ENCODE measurements at regions of chr11 and their contacts with region 1.

Region 1: DNA sequence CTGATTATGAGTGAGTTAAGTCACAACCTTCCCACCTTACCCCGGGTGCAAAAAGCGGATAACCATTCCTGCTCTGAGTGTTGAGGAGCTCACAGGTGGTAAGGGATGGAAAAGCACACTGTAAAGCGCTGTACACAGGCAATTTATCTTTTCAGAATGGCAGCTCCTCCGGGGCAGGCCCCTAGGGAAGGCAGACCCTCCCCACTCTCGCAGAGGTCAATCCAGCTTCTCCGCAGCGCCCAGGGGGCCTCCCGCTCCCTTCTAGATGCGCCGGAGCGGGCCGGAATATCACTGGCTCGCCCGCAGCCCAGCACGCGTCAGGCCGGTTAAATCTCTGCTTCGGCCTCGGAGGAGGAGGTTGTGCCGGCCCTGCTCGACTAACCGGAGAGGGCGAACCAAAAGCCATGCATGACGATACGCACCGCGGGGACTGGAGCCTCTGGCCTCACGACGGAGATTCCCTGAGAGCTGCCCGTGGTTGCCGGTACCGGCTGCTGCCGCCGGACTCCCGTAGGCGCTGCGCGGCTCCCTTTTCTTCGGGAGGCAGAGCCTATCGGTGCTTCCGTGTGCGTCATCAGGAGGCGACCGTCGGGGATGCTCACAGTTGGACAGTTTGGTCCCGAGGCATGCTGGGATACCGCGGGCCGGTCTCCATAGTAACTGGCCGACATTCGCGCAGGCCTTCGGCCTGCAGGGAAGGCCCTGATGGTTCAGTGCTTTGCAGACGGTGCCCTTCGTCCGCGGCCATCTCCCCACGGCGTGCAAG is at the start of gene BRMS1:
- DNase-seq: peak; percentile 94
- H3K4me3 Mint-ChIP-seq: peak within 1 kb of the TSS; percentile 97
- H3K27ac Mint-ChIP-seq: peak within 1 kb of the TSS; percentile 95
- H3K4me1 Mint-ChIP-seq: peaks cover 46% of the 10 kb centered on the region
- H3K27me3 Mint-ChIP-seq: peaks cover 2% of the 10 kb centered on the region
- total RNA-seq, gene BRMS1: 63.1 and 67.1 TPM in 2 replicates

Region 2: GRCh38 chr11:66051766-66052663 is 292.7 kb before region 1 on chr11 and contains the start of gene SF3B2:
- intact Hi-C with region 1: loop called (anchors 10 kb)
- DNase-seq: peak; percentile 97
- H3K4me3 Mint-ChIP-seq: peak within 1 kb of the TSS; percentile 100
- H3K27ac Mint-ChIP-seq: peak within 1 kb of the TSS; percentile 97
- H3K4me1 Mint-ChIP-seq: peaks cover 33% of the 10 kb centered on the region
- H3K27me3 Mint-ChIP-seq: peaks cover 4% of the 10 kb centered on the region
- total RNA-seq, gene SF3B2: 267 TPM in 2 replicates

Region 3: DNA sequence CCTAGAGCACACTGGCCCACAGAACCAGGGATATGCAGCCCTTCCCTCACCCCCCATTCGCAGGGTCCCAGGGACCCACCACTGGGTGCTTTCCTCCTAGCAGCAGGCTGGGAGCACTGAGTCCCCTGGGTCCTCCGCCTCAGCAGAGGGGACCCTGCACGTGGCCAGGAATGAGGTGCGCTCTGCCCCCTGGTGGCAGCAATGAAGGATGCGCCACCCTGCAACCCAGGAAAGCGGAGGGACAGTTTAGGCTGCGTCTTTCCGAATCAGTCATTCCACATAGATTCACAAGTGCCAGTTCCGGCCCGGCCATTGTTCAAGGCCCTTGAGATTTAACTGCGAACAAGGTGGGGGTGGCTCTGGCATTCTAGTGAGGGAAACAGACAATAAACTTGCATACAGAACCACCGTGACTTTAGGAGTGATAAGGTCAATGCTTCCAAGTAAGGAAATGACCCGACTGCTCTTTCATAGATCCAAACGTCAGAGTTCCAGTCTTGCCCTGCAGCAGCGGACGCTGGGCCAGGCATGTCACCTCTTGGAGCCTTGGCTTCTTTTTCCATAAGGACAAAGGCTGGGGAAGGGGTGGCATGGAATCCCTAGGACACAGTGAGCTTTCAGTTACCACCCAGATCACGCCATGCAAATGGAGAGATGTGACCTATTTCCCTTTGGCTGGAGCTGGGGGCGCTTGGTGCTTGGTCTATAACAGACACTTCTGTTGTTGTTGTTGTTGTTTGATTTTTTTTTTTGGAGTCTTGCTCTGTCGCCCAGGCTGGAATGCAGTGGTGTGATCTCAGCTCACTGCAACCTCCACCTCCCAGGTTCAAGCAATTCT is 16.2 kb before region 1 on chr11:
- intact Hi-C with region 1: loop called (anchors 2 kb)
- DNase-seq: peak; percentile 73
- H3K4me3 Mint-ChIP-seq: peak overlapping the region; percentile 59
- H3K27ac Mint-ChIP-seq: peak overlapping the region; percentile 61
- H3K4me1 Mint-ChIP-seq: peaks cover 25% of the 10 kb centered on the region
- H3K27me3 Mint-ChIP-seq: no peaks in the 10 kb centered on the region

Region 4: DNA sequence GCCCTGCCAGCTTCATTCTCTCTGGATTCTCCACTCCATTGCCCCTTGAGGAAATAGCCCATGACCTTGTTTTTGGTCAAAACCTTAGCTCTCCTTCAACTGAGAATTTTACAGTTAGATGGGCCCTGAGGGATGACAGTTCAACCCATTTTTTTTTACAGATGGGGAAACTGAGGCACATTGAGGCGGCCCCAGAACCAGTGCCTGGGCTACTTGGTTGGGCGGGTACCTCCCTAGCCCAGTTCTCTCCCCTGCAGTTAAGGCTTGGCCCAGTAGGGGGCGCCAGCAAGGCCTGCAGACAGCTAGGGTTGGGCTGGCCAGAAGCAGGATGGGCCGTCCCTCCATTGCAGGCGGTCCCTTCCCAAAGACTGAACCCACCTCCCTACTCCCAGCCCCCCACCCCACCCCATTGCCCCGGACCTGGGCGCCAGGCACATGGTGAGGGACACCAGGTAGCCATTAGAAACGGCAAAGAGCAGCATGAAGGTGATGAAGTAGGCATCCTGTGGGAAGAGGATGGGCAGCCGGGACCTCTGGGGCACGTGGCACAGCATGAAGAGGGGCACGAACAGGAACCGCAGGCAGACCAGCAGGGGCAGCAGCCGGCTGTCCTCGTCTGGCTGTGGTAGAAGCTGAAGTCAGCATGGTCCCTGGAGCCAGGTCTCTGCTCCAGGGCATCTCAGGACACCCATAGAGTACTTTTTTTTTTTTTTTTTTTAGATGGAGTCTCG is 19.2 kb after region 1 on chr11:
- intact Hi-C with region 1: loop called (anchors 1 kb)
- DNase-seq: peak; percentile 50
- H3K4me3 Mint-ChIP-seq: no peak overlapping the region
- H3K27ac Mint-ChIP-seq: no peak overlapping the region
- H3K4me1 Mint-ChIP-seq: no peaks in the 10 kb centered on the region
- H3K27me3 Mint-ChIP-seq: no peaks in the 10 kb centered on the region

Region 5: DNA sequence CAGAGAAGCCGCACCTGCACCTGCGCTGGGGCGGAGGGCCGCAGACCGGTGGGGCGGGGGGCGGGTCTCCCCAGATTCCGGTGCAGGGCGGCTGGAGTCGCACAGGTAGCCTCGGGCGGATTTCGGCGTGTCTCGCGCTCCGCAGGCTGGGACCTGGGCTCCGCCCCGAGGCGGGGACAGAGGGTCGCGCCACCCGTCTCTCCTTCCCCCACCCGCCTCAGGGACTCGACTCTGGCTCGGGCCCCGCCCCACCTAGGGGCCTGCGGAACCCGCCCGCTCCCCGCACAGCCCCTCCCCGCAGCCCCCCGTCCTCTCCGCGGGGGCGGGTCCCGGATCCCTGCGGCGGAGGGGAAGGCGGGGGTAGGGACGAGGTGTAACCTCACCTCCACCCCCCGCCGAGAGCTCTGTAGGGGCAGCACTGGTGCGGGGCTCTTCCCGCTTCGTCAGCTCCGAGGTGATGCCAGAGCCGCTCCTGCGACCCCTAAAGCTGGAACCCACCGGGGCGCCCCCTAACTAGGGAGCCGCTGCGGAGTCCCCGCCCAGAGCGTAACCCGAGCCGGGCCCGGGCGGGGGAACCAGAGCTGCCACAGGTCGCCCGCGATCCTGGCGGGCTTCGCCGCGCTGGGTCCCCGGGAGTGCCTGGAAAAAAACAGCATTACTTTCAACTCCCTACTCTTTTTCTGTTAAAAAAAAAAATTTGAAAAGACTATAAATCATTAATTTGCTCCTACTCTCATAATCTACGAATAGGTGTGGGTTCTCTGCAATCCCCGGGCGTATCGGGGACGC is 27.1 kb after region 1 on chr11 and contains the start of gene SLC29A2:
- intact Hi-C with region 1: loop called (anchors 1 kb)
- DNase-seq: peak; percentile 71
- H3K4me3 Mint-ChIP-seq: peak within 1 kb of the TSS; percentile 89
- H3K27ac Mint-ChIP-seq: peak within 1 kb of the TSS; percentile 86
- H3K4me1 Mint-ChIP-seq: peaks cover 9% of the 10 kb centered on the region
- H3K27me3 Mint-ChIP-seq: peaks cover 3% of the 10 kb centered on the region
- total RNA-seq, gene SLC29A2: 14.3 and 16.6 TPM in 2 replicates

Region 6: DNA sequence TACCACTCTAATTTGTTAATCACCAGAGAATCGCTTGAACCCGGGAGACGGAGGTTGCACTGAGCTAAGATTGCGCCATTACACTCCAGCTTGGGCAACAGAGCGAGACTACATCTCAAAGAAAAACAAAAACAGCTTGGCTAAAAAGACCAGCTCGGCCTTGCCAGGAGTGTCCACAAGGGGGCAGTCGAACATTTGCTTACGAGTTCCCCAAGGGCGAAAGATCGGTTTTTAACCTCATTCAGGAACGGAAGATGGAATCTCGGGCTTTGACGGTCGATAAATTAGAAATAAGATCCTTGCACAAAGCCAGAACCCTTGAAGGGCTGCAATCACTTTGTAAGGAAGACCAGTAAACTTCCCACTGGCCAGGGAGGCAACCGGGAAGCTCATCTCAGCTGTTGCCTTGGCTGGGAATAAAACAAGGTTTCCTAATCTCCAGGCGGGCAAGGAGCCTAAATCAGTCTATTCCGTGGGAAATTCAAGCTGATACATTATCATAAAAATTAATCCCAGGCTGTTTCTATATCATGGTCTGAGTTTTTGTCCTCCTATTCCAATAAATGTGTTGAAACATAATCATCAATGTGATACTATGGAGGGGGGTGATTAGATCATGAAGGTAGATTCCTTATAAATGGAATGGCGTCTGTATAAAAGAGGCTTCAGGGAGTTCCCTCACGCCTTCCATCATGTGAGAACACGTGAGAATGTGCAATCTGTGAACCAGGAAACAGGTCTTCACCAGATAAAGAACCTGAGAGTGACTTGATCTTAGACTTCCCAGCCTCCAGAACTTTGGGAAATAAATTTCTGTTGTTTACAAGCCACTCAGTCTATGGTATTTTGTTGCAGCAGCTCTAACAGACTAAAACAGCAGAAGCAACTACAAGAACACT is 41.7 kb after region 1 on chr11:
- intact Hi-C with region 1: loop called (anchors 5 kb)
- DNase-seq: peak; percentile 71
- H3K4me3 Mint-ChIP-seq: no peak overlapping the region
- H3K27ac Mint-ChIP-seq: peak overlapping the region; percentile 2
- H3K4me1 Mint-ChIP-seq: peaks cover 10% of the 10 kb centered on the region
- H3K27me3 Mint-ChIP-seq: peaks cover 2% of the 10 kb centered on the region

Region 7: DNA sequence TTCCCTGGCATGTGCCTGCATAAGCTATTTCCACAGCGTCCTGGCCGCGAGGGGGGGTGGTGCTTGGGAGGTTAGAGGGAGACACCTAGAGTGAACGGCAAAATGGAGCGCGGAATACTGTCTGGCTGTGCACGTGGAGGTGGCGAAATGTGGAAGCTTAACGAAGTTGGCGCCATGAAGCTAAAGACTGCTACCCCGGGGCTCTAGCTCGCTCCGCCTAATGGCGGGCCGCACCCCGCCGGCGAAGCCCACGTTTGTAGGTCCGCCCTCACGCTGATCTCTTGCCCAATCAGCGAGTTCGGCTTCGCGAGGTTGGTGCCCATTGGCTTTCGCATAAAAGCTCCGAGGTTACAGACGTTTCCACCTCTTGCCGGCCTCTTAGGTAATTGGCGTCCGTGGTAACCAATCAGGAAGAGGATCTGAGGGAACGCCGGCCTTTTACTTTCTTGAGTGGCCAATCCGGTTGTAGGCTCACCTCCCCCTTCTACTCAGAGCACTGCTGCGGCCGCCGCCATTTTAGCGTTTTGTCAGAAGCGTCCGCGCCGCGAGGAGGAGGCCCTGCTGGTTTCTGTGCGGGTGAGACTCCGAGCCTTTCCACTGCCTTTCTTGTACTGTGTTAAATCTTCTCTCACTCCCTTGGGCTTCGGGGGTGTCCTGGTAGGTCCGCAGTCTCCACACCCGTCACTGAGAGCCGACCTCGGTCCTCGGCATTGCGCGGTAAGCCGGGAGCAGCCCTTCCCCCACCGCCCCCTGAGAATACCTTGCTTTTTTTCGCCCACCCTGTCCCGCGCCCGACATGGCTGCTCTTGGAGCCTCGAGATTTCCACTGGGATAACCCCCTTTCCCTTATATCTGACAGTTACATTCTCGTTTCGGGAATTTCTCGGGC is 293.7 kb after region 1 on chr11 and contains the start of gene RBM4:
- intact Hi-C with region 1: loop called (anchors 1 kb)
- DNase-seq: peak; percentile 97
- H3K4me3 Mint-ChIP-seq: peak within 1 kb of the TSS; percentile 96
- H3K27ac Mint-ChIP-seq: peak within 1 kb of the TSS; percentile 96
- H3K4me1 Mint-ChIP-seq: peaks cover 68% of the 10 kb centered on the region
- H3K27me3 Mint-ChIP-seq: no peaks in the 10 kb centered on the region
- total RNA-seq, gene RBM4: 131 and 133 TPM in 2 replicates

Measured in activated T-helper 1 cell treated with anti-CD3 and anti-CD28 coated beads, Interleukin-12 subunit alpha, Interleukin-12 subunit beta, Interleukin-2, Interleukin-4 antibody, amounts not matched to agents 30 ng/mL and 10 ng/mL and 1 ng/mL, durations not matched to agents 14 hours and 24 hours and 36 hours (primary cell).